ENCODE measurements at regions of chr2 and their contacts with region 1.

Region 1: DNA sequence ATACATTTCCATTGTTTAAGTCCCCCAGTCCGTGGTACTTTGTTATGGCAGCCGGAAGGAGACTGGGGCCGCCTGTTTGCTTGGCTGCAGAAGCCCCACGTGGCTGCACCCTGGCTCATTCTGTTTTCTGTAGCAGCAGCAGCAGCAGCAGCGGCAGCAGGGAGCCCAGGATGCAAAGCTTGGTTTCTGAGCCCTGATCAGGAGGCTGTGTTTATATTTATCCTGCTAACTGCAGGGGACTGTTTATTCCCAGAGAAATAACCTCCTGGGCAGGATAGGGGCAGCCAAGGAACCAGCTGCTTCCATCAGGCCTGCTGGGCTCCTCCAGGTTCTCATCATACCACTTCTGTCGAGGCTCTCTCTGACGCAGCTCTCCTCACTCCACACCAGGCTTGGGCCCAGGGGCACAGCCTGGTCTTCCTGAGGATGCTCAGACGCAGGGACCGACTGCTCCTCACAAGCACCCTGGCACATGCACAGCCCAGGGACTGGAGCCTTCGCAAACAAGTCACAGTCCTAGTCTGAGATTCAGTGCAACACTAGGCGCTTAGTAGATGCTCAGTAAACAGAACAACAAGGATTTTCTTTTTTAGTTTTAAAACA is 139.0 kb downstream of the MSH2 start:
- DNase-seq: no peak
- H3K4me3 ChIP-seq: no peak overlapping the region
- H3K27ac ChIP-seq: no peak overlapping the region
- H3K4me1 ChIP-seq: no peaks in the 10 kb centered on the region
- H3K27me3 ChIP-seq: no peaks in the 10 kb centered on the region
- CTCF ChIP-seq: no peak
- EP300 ChIP-seq: no peak
- POLR2A ChIP-seq: no peak

Region 2: DNA sequence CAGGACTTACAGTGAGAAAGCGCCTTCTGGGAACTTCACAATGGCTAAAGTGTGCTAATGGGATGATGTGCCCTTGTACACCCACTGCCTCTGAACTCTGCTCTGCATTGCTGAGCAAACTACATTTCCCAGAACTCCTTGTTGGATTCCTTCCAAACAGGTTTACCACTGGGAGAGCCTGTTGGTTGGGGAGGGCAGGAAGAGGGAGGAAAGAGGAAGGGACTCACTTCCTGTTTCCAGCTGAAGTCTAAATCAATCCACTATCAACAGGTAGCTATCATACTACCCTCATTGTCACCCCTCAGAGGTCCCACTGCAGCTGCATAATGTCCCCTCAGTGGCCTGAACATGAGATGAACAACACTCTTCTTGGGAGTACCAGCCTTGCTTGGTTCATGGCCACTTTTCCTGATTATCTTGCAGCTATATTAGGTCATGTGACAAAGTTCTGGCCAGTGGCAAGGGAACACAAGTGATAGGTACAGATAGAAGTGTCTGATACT is 29.3 kb before region 1 on chr2:
- in situ Hi-C with region 1: no loop called
- intact Hi-C with region 1: no loop called
- DNase-seq: no peak
- H3K4me3 ChIP-seq: no peak overlapping the region
- H3K27ac ChIP-seq: no peak overlapping the region
- H3K4me1 ChIP-seq: no peaks in the 10 kb centered on the region
- H3K27me3 ChIP-seq: peaks cover 3% of the 10 kb centered on the region
- CTCF ChIP-seq: no peak
- EP300 ChIP-seq: no peak
- POLR2A ChIP-seq: no peak

Region 3: GRCh38 chr2:47675196-47675825 is 133.4 kb after region 1 on chr2:
- in situ Hi-C with region 1: no loop called
- intact Hi-C with region 1: loop called (anchors 5 kb)
- DNase-seq: no peak
- H3K4me3 ChIP-seq: no peak overlapping the region
- H3K27ac ChIP-seq: no peak overlapping the region
- H3K4me1 ChIP-seq: no peaks in the 10 kb centered on the region
- H3K27me3 ChIP-seq: no peaks in the 10 kb centered on the region
- CTCF ChIP-seq: no peak
- EP300 ChIP-seq: no peak
- POLR2A ChIP-seq: no peak

Region 4: GRCh38 chr2:47964774-47965434 is 423.0 kb after region 1 on chr2:
- in situ Hi-C with region 1: no loop called
- intact Hi-C with region 1: no loop called
- DNase-seq: no peak
- H3K4me3 ChIP-seq: no peak overlapping the region
- H3K27ac ChIP-seq: no peak overlapping the region
- H3K4me1 ChIP-seq: no peaks in the 10 kb centered on the region
- H3K27me3 ChIP-seq: no peaks in the 10 kb centered on the region
- CTCF ChIP-seq: no peak
- EP300 ChIP-seq: no peak
- POLR2A ChIP-seq: no peak

Region 5: GRCh38 chr2:48685126-48685525 is 1143.2 kb after region 1 on chr2:
- in situ Hi-C with region 1: no loop called
- intact Hi-C with region 1: no loop called
- DNase-seq: no peak
- H3K4me3 ChIP-seq: no peak overlapping the region
- H3K27ac ChIP-seq: no peak overlapping the region
- H3K4me1 ChIP-seq: no peaks in the 10 kb centered on the region
- H3K27me3 ChIP-seq: no peaks in the 10 kb centered on the region
- CTCF ChIP-seq: no peak
- EP300 ChIP-seq: no peak
- POLR2A ChIP-seq: no peak